Endothelial cell of umbilical vein (primary cell): ENCODE measurements at regions of chr6 and their contacts with region 1.

Region 1: GRCh38 chr6:85628353-85628752 is 14.3 kb downstream of the SYNCRIP start:
- DNase-seq: no peak
- H3K4me3 ChIP-seq: no peak overlapping the region
- H3K27ac ChIP-seq: no peak overlapping the region
- H3K4me1 ChIP-seq: no peaks in the 10 kb centered on the region
- H3K27me3 ChIP-seq: no peaks in the 10 kb centered on the region
- CTCF ChIP-seq: no peak
- POLR2A ChIP-seq: no peak

Region 2: GRCh38 chr6:85610182-85610895 is 18.0 kb before region 1 on chr6:
- CTCF ChIA-PET with region 1: interaction called, 4 read pairs
- POLR2A ChIA-PET with region 1: interaction called, 3 read pairs
- dilution Hi-C with region 1: no loop called
- intact Hi-C with region 1: loop called (anchors 2 kb)
- DNase-seq: no peak
- H3K4me3 ChIP-seq: no peak overlapping the region
- H3K27ac ChIP-seq: no peak overlapping the region
- H3K4me1 ChIP-seq: no peaks in the 10 kb centered on the region
- H3K27me3 ChIP-seq: no peaks in the 10 kb centered on the region
- CTCF ChIP-seq: no peak
- POLR2A ChIP-seq: no peak

Region 3: GRCh38 chr6:85726206-85726605 is 97.9 kb after region 1 on chr6:
- CTCF ChIA-PET with region 1: no interaction called
- POLR2A ChIA-PET with region 1: no interaction called
- dilution Hi-C with region 1: no loop called
- intact Hi-C with region 1: no loop called
- DNase-seq: no peak
- H3K4me3 ChIP-seq: no peak overlapping the region
- H3K27ac ChIP-seq: no peak overlapping the region
- H3K4me1 ChIP-seq: no peaks in the 10 kb centered on the region
- H3K27me3 ChIP-seq: no peaks in the 10 kb centered on the region
- CTCF ChIP-seq: no peak
- POLR2A ChIP-seq: no peak